T-cell (primary cell): ENCODE measurements at regions of chr13 and their contacts with region 1.

Region 1: GRCh38 chr13:44395976-44396694 is 22.5 kb downstream of the SERP2 start:
- DNase-seq: no peak
- ATAC-seq: no peak
- H3K4me3 ChIP-seq: no peak overlapping the region
- H3K4me3 Mint-ChIP-seq: no peak overlapping the region
- H3K27ac ChIP-seq: no peak overlapping the region
- H3K27ac Mint-ChIP-seq: no peak overlapping the region
- H3K4me1 ChIP-seq: no peaks in the 10 kb centered on the region
- H3K4me1 Mint-ChIP-seq: peaks cover 0 to 3% (median 0%) of the 10 kb centered on the region in 3 donors
- H3K27me3 ChIP-seq: no peaks in the 10 kb centered on the region
- H3K27me3 Mint-ChIP-seq: peaks cover 0 to 14% of the 10 kb centered on the region in 2 donors

Region 2: DNA sequence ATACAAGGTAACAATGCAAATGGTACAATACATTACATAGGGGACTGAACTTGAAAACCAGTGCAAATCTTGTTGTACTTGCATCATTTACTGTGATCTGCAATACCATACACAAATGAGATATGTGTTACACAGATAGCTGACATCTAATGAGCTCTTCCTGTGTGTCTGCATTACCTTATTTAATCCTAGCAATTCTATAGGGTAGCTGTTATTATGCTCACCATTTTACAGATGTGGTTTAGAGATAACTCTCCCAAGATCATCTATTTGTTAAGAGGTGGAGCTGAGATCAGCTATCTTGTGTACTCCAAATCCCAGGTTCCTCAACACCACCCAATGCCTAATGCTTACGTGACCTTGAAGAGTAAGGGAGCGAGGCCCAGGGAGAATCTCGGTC is 43.9 kb before region 1 on chr13:
- CTCF ChIA-PET with region 1: no interaction called
- POLR2A ChIA-PET with region 1: interaction called, 5 to 14 read pairs
- DNase-seq: peak in 1 of 35 experiments; percentile 6
- ATAC-seq: peak in 2 of 4 experiments; percentile 43 to 61
- H3K4me3 ChIP-seq: no peak overlapping the region
- H3K4me3 Mint-ChIP-seq: no peak overlapping the region
- H3K27ac ChIP-seq: peak overlapping the region; percentile 32
- H3K27ac Mint-ChIP-seq: no peak overlapping the region
- H3K4me1 ChIP-seq: peaks cover 14 to 17% of the 10 kb centered on the region in 2 experiments
- H3K4me1 Mint-ChIP-seq: peaks cover 20 to 26% (median 24%) of the 10 kb centered on the region in 3 donors
- H3K27me3 ChIP-seq: no peaks in the 10 kb centered on the region
- H3K27me3 Mint-ChIP-seq: peaks cover 3 to 10% of the 10 kb centered on the region in 2 donors